A673 (cell line): ENCODE measurements at regions of chr2 and their contacts with region 1.

Region 1: GRCh38 chr2:138373993-138374408 is 127.6 kb upstream of the SPOPL start:
- DNase-seq: peak; percentile 47
- H3K4me3 ChIP-seq: no peak overlapping the region
- H3K27ac ChIP-seq: no peak overlapping the region
- H3K4me1 ChIP-seq: no peaks in the 10 kb centered on the region
- H3K27me3 ChIP-seq: no peaks in the 10 kb centered on the region
- CTCF ChIP-seq: peak; percentile 84

Region 2: GRCh38 chr2:137910641-137911040 is 463.4 kb before region 1 on chr2:
- CTCF ChIA-PET with region 1: interaction called, 9 read pairs
- POLR2A ChIA-PET with region 1: no interaction called
- intact Hi-C with region 1: loop called (anchors 5 kb)
- DNase-seq: peak; percentile 22
- H3K4me3 ChIP-seq: no peak overlapping the region
- H3K27ac ChIP-seq: no peak overlapping the region
- H3K4me1 ChIP-seq: no peaks in the 10 kb centered on the region
- H3K27me3 ChIP-seq: no peaks in the 10 kb centered on the region
- CTCF ChIP-seq: peak; percentile 64

Region 3: GRCh38 chr2:137947728-137948336 is 426.2 kb before region 1 on chr2:
- CTCF ChIA-PET with region 1: no interaction called
- POLR2A ChIA-PET with region 1: no interaction called
- intact Hi-C with region 1: loop called (anchors 5 kb)
- DNase-seq: peak; percentile 65
- H3K4me3 ChIP-seq: no peak overlapping the region
- H3K27ac ChIP-seq: no peak overlapping the region
- H3K4me1 ChIP-seq: no peaks in the 10 kb centered on the region
- H3K27me3 ChIP-seq: no peaks in the 10 kb centered on the region
- CTCF ChIP-seq: peak; percentile 69

Region 4: DNA sequence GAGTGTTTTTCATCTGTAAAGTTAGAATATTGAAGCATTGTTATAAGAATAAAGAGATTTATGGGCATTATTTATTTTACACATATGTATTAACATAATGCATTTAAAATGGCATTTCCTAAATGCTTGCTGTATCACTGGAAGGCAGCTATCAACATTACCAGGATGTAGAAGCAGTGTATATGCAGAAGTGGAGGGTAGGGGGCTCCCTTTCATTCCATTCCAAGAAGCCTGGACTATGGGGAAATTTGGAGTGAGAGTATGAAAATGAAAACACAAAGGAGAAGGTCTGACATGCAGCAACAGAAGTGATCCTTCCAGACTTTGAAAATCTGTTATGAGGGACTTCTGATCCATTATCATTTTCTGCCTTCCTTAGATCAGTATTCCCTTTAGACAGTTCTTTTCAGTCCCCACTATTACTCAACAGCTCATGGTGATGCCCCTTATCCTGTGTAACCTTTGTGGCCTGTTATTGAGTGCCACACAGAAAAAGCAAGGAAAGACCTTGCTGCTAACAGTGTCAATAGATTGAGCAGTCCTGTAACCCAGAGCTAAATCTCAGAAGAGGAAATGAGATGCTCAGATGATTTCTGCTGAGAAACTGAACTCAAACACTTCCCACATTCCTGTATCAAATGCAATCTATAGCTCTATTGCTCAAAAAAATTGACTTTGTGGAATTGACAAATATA is 193.2 kb before region 1 on chr2:
- CTCF ChIA-PET with region 1: no interaction called
- POLR2A ChIA-PET with region 1: no interaction called
- intact Hi-C with region 1: loop called (anchors 2 kb)
- DNase-seq: peak; percentile 25
- H3K4me3 ChIP-seq: no peak overlapping the region
- H3K27ac ChIP-seq: no peak overlapping the region
- H3K4me1 ChIP-seq: no peaks in the 10 kb centered on the region
- H3K27me3 ChIP-seq: no peaks in the 10 kb centered on the region
- CTCF ChIP-seq: peak; percentile 48; the same call in 1 of the 2 replicates

Region 5: DNA sequence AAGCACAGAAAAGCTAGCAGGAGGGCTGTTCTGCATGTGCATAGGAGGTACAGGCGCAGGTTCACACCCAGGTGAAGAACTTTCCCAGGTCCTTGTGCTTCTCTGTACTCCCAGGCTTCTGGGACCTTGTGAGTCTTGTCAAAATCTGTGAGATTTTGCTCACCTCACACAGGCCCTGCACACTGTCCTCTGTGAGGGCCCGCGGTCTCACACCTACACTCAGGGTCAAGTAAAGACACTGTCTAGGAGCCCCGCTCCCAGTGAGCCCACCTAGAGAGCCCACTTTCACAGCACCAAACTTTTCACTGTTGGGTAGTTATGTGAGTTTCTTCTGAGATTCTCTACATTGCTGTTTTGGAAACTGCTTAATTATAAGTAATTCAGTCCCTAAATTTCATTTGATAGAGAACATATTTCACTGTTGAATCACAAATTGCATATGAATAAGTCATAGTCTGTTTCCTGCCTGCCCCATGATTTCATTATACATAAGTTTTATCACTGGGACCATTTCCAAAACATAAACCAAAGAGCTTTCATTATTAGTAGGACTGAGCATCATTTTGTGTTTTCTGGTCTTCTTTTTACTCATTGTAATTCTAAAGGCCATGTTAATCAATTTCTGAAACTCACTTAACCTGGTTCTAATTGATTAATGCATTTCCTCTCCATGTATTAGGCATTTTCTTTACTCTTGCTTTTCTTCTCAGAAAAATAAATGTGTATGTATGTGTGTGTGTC is 106.7 kb before region 1 on chr2:
- CTCF ChIA-PET with region 1: no interaction called
- POLR2A ChIA-PET with region 1: no interaction called
- intact Hi-C with region 1: no loop called
- DNase-seq: peak; percentile 79
- H3K4me3 ChIP-seq: peak overlapping the region; percentile 13
- H3K27ac ChIP-seq: peak overlapping the region; percentile 63
- H3K4me1 ChIP-seq: peaks cover 27% of the 10 kb centered on the region
- H3K27me3 ChIP-seq: no peaks in the 10 kb centered on the region
- CTCF ChIP-seq: no peak